ENCODE measurements at regions of chr1 and their contacts with region 1.

Region 1: GRCh38 chr1:194114288-194114687 is 927.9 kb upstream of the B3GALT2 start:
- DNase-seq: no peak
- CTCF ChIP-seq: no peak

Region 2: GRCh38 chr1:193614817-193615216 is 499.5 kb before region 1 on chr1:
- CTCF ChIA-PET with region 1: no interaction called
- POLR2A ChIA-PET with region 1: no interaction called
- DNase-seq: no peak
- CTCF ChIP-seq: no peak

Region 3: DNA sequence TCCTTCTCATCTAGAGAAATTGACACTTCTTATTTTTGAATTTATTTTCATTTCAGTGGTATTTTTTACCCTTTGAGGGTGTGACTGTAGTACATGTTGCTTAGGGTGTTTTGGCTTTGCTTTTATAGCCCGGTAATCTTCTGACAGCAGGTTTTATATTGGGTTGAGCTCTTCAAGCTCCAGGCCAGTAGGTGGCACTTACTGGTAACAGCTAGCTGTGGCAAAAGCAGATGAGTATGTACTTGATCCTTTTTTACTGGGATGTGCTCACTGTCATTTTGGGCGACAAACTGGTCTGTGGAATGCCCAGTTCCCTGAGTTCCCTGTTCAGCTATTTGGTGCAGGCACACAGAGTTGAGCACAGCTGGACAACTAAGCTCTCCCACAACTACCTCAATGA is 11.7 kb before region 1 on chr1:
- CTCF ChIA-PET with region 1: interaction called, 19 read pairs
- POLR2A ChIA-PET with region 1: no interaction called
- DNase-seq: no peak
- CTCF ChIP-seq: no peak